Heart right ventricle (tissue), 16 donors: ENCODE measurements at regions of chr10 and their contacts with region 1.

Region 1: GRCh38 chr10:81386817-81387216 is 488.2 kb upstream of the NRG3 start:
- DNase-seq: no peak
- ATAC-seq: no peak
- H3K4me3 ChIP-seq: no peak overlapping the region
- H3K27ac ChIP-seq: no peak overlapping the region
- H3K4me1 ChIP-seq: no peaks in the 10 kb centered on the region
- H3K27me3 ChIP-seq: no peaks in the 10 kb centered on the region
- CTCF ChIP-seq: no peak

Region 2: GRCh38 chr10:80870282-80870681 is 516.5 kb before region 1 on chr10:
- intact Hi-C with region 1: loop called in 1 of 10 experiments (anchors 5 kb)
- DNase-seq: no peak
- ATAC-seq: no peak
- H3K4me3 ChIP-seq: no peak overlapping the region
- H3K27ac ChIP-seq: no peak overlapping the region
- H3K4me1 ChIP-seq: no peaks in the 10 kb centered on the region
- H3K27me3 ChIP-seq: peaks cover 0 to 6% (median 0%) of the 10 kb centered on the region in 7 donors
- CTCF ChIP-seq: no peak

Region 3: DNA sequence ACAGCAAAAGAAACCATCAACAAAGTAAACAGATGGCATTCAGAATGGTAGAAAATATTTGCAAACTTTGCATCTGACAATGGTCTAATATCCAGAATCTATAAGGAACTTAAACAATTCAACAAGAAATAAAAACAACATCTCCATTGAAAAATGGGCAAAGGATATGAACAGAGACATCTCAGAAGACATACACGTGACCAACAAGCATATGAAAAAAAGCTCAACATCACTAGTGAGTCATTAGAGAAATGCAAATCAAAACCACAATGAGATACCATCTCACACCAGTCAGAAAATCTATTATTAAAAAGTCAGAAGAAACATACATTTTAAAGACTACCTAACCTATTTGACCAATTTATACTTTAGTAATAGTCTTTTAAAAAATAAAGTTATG is 83.2 kb before region 1 on chr10:
- intact Hi-C with region 1: no loop called
- DNase-seq: no peak
- ATAC-seq: no peak
- H3K4me3 ChIP-seq: no peak overlapping the region
- H3K27ac ChIP-seq: no peak overlapping the region
- H3K4me1 ChIP-seq: no peaks in the 10 kb centered on the region
- H3K27me3 ChIP-seq: no peaks in the 10 kb centered on the region
- CTCF ChIP-seq: no peak